ENCODE measurements at regions of chr11 and their contacts with region 1.

Region 1: DNA sequence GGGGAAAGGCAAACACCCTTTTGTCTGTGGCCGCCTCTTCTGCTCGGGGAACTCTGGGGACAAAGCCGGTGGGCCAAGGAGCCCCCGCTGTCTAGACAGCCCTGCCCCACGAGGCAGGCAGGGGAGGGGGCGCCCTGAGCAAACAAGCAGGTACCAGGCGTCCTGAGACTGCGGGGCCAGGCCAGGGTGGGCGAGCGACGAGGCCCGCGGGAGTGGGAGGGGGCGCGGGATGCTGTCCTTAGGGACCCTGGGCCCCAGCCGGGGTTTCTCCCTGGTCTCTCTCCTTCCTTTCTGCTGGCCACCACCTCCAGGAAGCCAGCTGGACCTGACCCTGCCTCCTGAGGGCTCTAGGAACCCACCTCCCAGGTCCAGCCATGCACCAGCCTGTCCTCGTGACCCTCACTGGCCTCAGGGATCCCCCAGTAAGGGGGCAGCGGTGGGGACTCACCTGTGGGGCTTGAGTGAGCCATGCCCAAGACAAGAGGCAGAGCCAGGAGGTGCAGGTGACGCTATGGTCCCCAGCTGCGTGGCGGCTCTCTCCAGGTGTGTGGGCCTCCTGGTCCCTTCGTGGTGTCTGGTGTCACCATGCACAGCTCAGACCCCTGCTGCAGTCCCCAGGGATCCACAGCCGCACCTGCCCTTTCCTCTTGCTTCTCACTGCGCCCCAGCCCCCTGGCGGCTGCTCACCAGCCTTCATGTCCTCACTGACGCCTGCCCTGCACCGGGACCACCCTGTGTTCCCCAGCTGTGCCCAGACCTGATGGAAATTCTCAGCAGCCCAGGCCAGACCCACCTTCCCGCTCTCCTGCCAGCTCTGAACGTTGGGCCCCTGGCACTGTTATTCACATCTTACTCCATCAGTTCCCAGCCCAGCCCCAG is 26.5 kb upstream of the MUC5AC start:
- DNase-seq: no peak
- H3K4me3 ChIP-seq: no peak overlapping the region
- H3K27ac ChIP-seq: no peak overlapping the region
- H3K4me1 ChIP-seq: no peaks in the 10 kb centered on the region
- H3K27me3 ChIP-seq: peaks cover 7% of the 10 kb centered on the region
- CTCF ChIP-seq: no peak

Region 2: DNA sequence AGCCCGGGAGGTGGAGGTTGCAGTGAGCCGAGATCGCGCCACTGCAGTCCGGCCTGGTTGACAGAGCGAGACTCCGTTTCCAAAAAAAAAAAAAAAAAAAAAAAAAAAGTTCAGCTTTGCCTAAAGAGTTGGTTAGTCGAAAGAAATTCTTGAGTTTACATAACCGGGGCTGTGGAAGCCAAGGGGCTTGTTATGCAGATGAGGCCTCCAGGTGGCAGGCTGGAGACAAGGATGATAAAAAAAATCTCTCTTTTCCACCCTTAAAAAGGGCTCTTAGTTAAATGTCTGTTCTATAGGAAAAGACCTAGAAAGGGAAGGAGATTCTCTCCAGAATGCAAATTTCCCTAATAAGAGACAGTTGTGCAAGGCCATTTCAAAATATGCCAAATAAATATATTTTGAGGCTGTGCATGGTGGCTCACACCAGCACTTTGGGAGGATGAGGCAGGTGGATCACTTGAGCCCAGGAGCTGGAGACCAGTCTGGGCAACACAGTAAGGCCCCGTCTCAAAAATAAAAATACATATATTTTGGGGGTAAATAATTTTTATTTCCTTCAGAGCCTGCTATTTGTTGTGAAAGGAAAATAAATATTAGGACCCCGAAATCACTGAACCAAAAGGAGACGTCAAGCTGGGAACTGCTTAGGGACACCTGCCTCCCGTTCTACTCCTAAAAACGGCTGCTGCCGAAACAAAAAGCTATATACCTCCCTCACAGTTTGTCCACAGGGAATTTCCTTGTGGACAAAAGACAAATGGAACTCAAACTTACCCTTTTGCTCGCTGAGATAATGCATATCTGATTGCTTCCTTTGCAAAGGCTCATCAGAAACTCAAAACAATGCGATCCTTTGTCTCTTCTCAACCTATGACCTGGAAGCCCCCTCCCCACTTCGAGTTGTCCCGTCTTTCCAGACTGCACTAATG is 826.1 kb before region 1 on chr11:
- CTCF ChIA-PET with region 1: no interaction called
- dilution Hi-C with region 1: no loop called
- in situ Hi-C with region 1: no loop called
- intact Hi-C with region 1: no loop called
- DNase-seq: peak; percentile 25
- H3K4me3 ChIP-seq: no peak overlapping the region
- H3K27ac ChIP-seq: no peak overlapping the region
- H3K4me1 ChIP-seq: peaks cover 8% of the 10 kb centered on the region
- H3K27me3 ChIP-seq: no peaks in the 10 kb centered on the region
- CTCF ChIP-seq: peak; percentile 70 to 71

Region 3: GRCh38 chr11:1087961-1088908 is 43.0 kb before region 1 on chr11:
- CTCF ChIA-PET with region 1: no interaction called
- dilution Hi-C with region 1: no loop called
- in situ Hi-C with region 1: no loop called
- intact Hi-C with region 1: no loop called
- DNase-seq: no peak
- H3K4me3 ChIP-seq: no peak overlapping the region
- H3K27ac ChIP-seq: no peak overlapping the region
- H3K4me1 ChIP-seq: peaks cover 20% of the 10 kb centered on the region
- H3K27me3 ChIP-seq: no peaks in the 10 kb centered on the region
- CTCF ChIP-seq: no peak

Region 4: GRCh38 chr11:1351278-1351937 is 220.1 kb after region 1 on chr11:
- CTCF ChIA-PET with region 1: no interaction called
- dilution Hi-C with region 1: loop called (anchors 25 kb)
- in situ Hi-C with region 1: no loop called
- intact Hi-C with region 1: no loop called
- DNase-seq: peak; percentile 2
- H3K4me3 ChIP-seq: no peak overlapping the region
- H3K27ac ChIP-seq: no peak overlapping the region
- H3K4me1 ChIP-seq: no peaks in the 10 kb centered on the region
- H3K27me3 ChIP-seq: no peaks in the 10 kb centered on the region
- CTCF ChIP-seq: no peak